AG04450 (cell line): ENCODE measurements at regions of chr7 and their contacts with region 1.

Region 1: DNA sequence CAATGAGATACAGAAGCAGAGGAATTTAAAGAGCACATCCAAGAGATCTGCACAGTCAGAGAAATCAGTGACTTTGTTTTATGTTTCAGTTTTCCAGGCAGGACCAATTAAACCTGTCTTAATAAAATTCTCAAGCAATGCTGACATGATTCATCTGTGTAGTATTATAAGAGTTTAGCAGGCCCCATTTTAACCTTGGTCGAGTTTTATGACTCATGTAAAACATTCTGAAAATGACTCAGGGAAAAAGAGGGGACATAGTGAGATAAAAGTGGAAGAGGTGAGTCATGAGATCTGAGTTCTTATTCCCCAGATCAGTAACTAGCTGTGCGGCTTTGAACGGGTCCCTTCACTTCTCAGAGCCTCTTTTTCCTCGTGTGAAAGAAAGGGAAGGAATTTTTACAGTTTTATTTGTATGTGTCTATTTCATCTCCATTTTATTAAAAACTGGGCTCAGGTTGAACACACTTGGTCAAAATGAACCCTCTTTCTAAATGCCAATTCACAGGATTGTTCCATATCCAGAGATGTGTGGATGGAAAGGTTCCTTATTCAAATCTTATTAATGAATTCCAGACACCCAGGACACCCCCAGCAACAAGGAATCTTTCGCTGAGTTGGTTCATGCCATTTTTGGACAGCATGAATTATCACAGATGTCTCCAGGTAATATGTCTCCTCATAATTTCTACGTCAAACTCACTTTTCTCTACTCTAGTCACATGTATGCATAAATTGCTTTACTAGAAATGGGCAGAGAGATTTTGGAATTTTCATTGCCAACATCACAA is 143.2 kb downstream of the JAZF1 start:
- DNase-seq: peak; percentile 83
- H3K4me3 ChIP-seq: no peak overlapping the region
- H3K27ac ChIP-seq: peak overlapping the region; percentile 71
- H3K27me3 ChIP-seq: no peaks in the 10 kb centered on the region
- CTCF ChIP-seq: no peak

Region 2: GRCh38 chr7:28062197-28062991 is 25.0 kb after region 1 on chr7:
- CTCF ChIA-PET with region 1: interaction called, 23 read pairs
- POLR2A ChIA-PET with region 1: interaction called, 4 read pairs
- DNase-seq: no peak
- H3K4me3 ChIP-seq: no peak overlapping the region
- H3K27ac ChIP-seq: peak overlapping the region; percentile 69
- H3K27me3 ChIP-seq: no peaks in the 10 kb centered on the region
- CTCF ChIP-seq: peak; percentile 63